Psoas muscle (tissue), 8 donors: ENCODE measurements at regions of chr7 and their contacts with region 1.

Region 1: GRCh38 chr7:55552320-55553023 is 19.8 kb downstream of the VOPP1 start:
- DNase-seq: peak; percentile 33 to 72
- ATAC-seq: peak; percentile 85 to 92 (median 90)
- H3K4me3 ChIP-seq: peak overlapping the region; percentile 53
- H3K27ac ChIP-seq: peak overlapping the region; percentile 89
- H3K4me1 ChIP-seq: peaks cover 63% of the 10 kb centered on the region
- H3K27me3 ChIP-seq: no peaks in the 10 kb centered on the region
- CTCF ChIP-seq: no peak

Region 2: DNA sequence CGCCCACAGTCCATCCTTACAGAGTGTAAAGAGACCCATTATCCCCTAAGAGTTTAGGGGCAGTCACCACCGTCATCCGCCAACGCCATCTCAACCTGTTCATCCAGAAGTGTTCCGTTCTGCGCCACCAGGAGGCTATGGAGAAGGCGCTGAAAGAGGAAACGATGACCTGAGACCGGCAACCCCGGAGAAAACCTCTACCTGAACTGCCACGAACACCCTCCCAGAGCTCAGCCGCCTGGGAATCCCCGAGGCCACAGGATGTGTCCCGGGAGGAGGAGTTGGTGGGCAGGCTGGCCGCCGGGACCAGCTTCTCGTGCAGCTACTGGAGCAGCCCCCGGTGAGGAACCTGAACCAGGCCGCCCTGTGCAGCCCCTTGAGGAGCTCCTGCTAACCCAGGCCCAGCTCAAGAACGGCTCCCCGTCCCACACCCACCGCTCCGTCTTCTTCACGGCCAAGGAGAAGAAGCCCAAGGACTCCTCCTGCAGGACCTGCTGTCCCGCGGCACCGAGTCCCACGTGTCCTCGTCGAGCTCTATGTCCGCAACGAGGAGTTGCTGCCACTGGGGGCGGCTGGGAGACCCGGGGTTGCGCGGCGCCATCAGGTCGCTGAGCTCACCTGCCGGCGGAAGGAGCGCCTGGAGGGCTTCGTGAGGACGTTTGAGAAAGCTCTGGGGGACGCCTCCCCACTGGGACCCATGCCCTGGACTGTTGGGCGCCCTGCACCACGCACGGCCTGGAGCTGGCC is 208.4 kb before region 1 on chr7:
- intact Hi-C with region 1: no loop called
- DNase-seq: no peak
- ATAC-seq: no peak
- H3K4me3 ChIP-seq: no peak overlapping the region
- H3K27ac ChIP-seq: no peak overlapping the region
- H3K4me1 ChIP-seq: no peaks in the 10 kb centered on the region
- H3K27me3 ChIP-seq: peaks cover 0 to 1% (median 0%) of the 10 kb centered on the region in 3 donors
- CTCF ChIP-seq: no peak

Region 3: GRCh38 chr7:55569797-55570196 is 17.3 kb after region 1 on chr7:
- intact Hi-C with region 1: loop called in 1 of 2 experiments (anchors 2 kb)
- DNase-seq: no peak
- ATAC-seq: no peak
- H3K4me3 ChIP-seq: no peak overlapping the region
- H3K27ac ChIP-seq: peak overlapping the region; percentile 92
- H3K4me1 ChIP-seq: peaks cover 62% of the 10 kb centered on the region
- H3K27me3 ChIP-seq: no peaks in the 10 kb centered on the region
- CTCF ChIP-seq: no peak

Region 4: GRCh38 chr7:55657654-55658053 is 105.2 kb after region 1 on chr7:
- intact Hi-C with region 1: no loop called
- DNase-seq: no peak
- ATAC-seq: no peak
- H3K4me3 ChIP-seq: no peak overlapping the region
- H3K27ac ChIP-seq: no peak overlapping the region
- H3K4me1 ChIP-seq: no peaks in the 10 kb centered on the region
- H3K27me3 ChIP-seq: no peaks in the 10 kb centered on the region
- CTCF ChIP-seq: no peak